ENCODE measurements at regions of chr7 and their contacts with region 1.

Region 1: DNA sequence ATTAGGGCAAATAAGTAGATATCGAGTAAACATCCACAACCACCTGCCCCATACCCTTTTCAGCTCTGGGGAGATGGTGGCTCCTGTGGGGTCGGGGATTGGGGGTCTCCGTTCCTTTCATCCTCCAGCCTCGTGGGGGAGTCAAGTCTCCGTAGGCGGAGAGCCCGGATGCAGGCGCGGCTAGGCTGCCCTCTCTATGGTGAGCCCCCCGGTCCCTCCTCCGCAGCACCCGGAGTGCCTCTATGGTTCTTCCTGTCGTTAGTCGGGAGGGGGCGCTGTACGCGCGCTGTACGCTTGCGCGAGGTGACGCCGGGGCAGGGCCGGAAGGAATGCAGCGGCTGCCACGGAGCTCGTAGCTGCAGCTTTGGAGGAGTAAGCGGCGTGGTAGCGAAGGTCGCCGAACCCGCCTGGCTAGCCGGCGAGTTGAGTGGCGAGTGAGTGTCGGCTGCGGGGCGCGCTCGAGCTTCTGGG is 14.8 kb upstream of the MMD2 start:
- DNase-seq: peak; percentile 85 to 97
- H3K4me3 ChIP-seq: peak overlapping the region; percentile 54 to 85 (median 63)
- H3K27ac ChIP-seq: no peak overlapping the region
- H3K4me1 ChIP-seq: no peaks in the 10 kb centered on the region
- H3K27me3 ChIP-seq: no peaks in the 10 kb centered on the region
- CTCF ChIP-seq: peak; percentile 54 to 86 (median 85)
- EP300 ChIP-seq: no peak
- POLR2A ChIP-seq: peak; percentile 47 to 69; a peak in 2 of 3 replicates
- RAD21 ChIP-seq: peak; percentile 67 to 69

Region 2: DNA sequence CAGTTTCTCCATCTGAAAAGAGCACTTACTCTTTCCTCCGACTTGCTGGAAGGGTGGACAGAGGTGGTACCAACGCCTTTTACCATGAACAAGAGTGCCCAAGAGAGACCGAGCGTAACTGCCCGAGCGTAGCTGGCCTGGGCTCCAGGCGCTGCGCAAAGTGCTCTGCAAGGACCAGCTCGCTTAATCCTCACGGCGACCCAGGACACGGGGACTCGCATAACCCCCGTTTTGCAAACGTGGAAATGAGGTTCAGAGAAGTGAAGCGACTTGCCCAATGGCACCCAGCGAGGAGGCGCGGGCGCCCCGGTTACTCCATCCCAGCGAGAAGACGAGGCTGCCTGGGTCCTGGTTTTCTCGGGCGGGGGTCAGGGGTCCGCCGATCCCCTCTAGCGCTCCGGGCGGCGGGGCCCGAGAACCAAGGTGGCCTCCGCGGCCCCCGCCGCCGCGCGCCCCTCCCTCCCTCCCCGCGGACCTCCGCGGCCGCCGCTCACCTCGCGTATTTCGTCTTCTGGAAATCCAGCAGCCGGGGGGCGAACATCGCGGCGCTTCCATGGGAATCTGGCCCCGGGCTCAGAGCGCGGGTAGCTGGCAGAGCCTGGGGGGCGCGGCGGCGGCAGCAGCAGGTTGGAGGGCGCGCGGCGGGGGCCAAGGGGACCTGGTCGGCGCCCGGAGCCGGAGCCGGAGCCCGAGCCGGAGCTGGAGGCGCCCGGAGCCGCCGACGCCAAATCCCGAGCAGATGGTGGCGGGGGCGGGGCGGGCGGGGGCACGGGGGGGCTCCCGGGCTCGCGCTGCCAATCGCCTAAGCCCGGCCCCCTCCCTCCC is 15.1 kb before region 1 on chr7 and contains the start of gene MMD2:
- CTCF ChIA-PET with region 1: interaction called, 16 read pairs
- POLR2A ChIA-PET with region 1: interaction called, 6 read pairs
- DNase-seq: peak in 1 of 2 experiments; percentile 60
- H3K4me3 ChIP-seq: peak within 1 kb of the TSS; percentile 33 to 60 (median 37)
- H3K27ac ChIP-seq: no peak within 1 kb of the TSS
- H3K4me1 ChIP-seq: peaks cover 0 to 6% (median 1%) of the 10 kb centered on the region in 4 experiments; a peak in 3 of 7 replicates
- H3K27me3 ChIP-seq: peaks cover 13 to 18% (median 16%) of the 10 kb centered on the region in 4 experiments
- CTCF ChIP-seq: no peak
- EP300 ChIP-seq: no peak
- POLR2A ChIP-seq: no peak
- RAD21 ChIP-seq: no peak
- total RNA-seq, gene MMD2: not detected in 2 replicates

Region 3: DNA sequence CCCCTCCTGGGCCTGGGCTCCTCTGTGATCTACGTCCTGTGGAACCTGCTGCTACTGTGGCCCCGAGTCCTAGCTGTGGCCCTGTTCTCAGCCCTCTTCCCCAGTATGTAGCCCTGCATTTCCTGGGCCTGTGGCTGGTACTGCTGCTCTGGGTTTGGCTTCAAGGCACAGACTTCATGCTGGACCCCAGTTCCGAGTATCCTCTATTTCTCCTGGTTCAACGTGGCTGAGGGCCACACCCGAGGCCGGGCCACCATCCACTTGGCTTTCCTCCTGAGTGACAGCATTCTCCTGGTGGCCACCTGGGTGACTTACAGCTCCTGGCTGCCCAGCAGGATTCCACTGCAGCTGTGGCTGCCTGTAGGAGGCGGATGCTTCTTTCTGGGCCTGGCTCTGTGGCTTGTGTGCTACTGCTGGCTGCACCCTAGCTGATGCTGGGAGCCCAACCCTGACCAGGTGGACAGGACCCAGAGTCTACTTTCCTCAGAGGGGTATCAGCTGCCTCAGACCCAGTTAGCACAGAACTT is 23.0 kb after region 1 on chr7:
- CTCF ChIA-PET with region 1: interaction called, 21 read pairs
- POLR2A ChIA-PET with region 1: interaction called, 3 read pairs
- DNase-seq: no peak
- H3K4me3 ChIP-seq: no peak overlapping the region
- H3K27ac ChIP-seq: no peak overlapping the region
- H3K4me1 ChIP-seq: no peaks in the 10 kb centered on the region
- H3K27me3 ChIP-seq: no peaks in the 10 kb centered on the region
- CTCF ChIP-seq: peak; percentile 20 to 38 (median 38)
- EP300 ChIP-seq: no peak
- POLR2A ChIP-seq: no peak
- RAD21 ChIP-seq: no peak; a peak in 1 of 4 replicates

Region 4: DNA sequence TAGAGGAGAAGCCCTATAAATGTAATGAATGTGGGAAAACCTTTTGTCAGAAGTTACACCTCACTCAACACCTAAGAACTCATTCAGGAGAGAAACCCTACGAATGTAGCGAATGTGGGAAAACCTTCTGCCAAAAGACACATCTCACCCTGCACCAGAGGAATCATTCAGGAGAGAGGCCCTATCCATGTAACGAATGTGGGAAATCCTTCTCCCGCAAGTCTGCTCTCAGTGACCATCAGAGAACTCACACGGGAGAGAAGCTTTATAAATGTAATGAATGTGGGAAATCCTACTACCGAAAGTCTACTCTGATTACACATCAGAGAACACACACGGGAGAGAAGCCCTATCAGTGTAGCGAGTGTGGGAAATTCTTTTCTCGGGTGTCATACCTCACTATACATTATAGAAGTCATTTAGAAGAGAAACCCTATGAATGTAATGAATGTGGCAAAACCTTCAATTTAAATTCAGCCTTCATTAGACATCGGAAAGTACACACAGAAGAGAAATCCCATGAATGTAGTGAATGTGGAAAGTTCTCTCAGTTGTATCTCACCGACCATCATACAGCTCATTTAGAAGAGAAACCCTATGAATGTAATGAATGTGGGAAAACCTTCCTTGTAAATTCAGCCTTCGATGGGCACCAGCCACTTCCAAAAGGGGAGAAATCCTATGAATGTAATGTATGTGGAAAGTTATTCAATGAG is 90.8 kb after region 1 on chr7:
- CTCF ChIA-PET with region 1: no interaction called
- POLR2A ChIA-PET with region 1: no interaction called
- DNase-seq: no peak
- H3K4me3 ChIP-seq: peak overlapping the region in 1 of 4 experiments; percentile 45; a peak in 2 of 8 replicates
- H3K27ac ChIP-seq: no peak overlapping the region
- H3K4me1 ChIP-seq: no peaks in the 10 kb centered on the region
- H3K27me3 ChIP-seq: no peaks in the 10 kb centered on the region
- CTCF ChIP-seq: no peak
- EP300 ChIP-seq: no peak
- POLR2A ChIP-seq: no peak
- RAD21 ChIP-seq: no peak

Region 5: DNA sequence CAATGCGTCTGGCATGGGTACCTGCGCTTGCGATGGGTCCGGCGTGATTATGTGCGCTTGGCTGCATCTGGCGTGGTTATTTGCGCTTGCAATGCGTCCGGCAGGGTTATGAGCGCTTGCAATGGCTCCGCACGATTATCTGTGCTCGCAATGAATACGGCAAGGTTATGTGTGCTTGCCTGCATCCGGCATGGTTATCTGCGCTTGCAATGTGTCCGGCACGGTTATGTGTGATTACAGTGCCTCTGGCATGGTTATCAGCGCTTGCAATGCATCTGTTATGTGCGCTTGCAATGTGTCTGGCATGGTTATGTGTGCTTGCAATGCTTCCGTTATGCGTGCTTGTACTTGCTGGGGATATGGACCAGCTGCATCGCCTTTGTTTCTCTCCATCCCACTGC is 109.5 kb after region 1 on chr7:
- CTCF ChIA-PET with region 1: interaction called, 57 read pairs
- POLR2A ChIA-PET with region 1: interaction called, 3 read pairs
- DNase-seq: no peak
- H3K4me3 ChIP-seq: no peak overlapping the region
- H3K27ac ChIP-seq: no peak overlapping the region
- H3K4me1 ChIP-seq: no peaks in the 10 kb centered on the region
- H3K27me3 ChIP-seq: 0 out of 7 replicates have a peak, but pooled peaks cover 0 to 3% (median 1%) of the 10 kb centered on the region in 4 experiments
- CTCF ChIP-seq: no peak
- EP300 ChIP-seq: no peak
- POLR2A ChIP-seq: no peak
- RAD21 ChIP-seq: no peak